ENCODE measurements at regions of chr1 and their contacts with region 1.

Region 1: GRCh38 chr1:45011837-45012638 is at the start of gene UROD:
- DNase-seq: peak; percentile 93
- ATAC-seq: peak; percentile 72
- H3K4me3 ChIP-seq: peak within 1 kb of the TSS; percentile 74 to 75
- H3K27ac ChIP-seq: peak within 1 kb of the TSS; percentile 65
- H3K4me1 ChIP-seq: peaks cover 9 to 28% of the 10 kb centered on the region in 2 experiments; a peak in 3 of 4 replicates
- H3K27me3 ChIP-seq: no peaks in the 10 kb centered on the region
- CTCF ChIP-seq: no peak
- POLR2A ChIP-seq: peak; percentile 85
- RAD21 ChIP-seq: peak; percentile 2; the same call in 1 of the 2 replicates
- total RNA-seq, gene UROD: 73.7 TPM

Region 2: DNA sequence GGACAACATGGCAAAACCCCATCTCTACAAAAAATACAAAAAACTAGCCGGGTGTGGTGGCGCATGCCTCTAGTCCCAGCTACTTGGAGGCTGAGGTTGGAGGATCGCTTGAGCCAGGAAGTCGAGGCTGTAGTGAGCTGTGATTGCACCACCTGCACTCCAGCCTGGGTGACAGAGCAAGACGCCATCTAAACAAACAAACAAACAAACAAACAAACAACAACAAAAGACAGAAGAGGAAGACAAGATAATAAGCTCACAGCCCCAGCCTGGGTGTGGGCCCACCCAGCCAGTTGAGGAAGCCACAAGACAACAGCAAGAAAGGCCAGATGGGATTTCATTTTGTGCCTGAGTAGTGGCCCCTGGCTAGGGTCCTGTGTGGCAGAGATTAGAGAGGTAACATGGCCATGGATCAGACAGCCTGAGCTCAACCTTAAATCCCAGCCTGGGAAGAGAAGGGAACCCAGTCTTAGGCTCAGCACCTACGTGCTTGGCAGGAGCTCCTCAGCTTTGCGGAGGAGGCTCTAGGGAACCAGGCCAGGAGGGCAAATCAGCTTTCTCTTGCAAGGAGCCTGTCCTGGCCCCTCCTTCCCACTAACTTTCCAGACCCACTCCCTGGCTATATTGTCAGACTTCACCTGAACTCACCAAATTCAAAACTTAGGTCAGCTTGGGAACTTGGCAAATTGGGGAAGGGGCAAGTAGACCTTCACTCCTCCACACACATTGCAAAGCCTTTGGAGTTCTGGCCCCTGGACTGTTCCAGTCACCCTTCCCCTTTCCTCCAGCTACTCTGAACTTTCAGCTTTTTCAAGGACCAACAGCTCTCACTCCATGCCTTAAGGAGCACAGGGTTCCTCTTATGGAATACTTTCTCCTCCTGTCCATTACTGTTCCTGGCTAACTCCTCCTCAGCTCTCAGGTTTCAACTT is 219.0 kb before region 1 on chr1:
- CTCF ChIA-PET with region 1: interaction called, 16 read pairs
- POLR2A ChIA-PET with region 1: interaction called, 16 read pairs
- RAD21 ChIA-PET with region 1: interaction called in 1 of 2 experiments, 4 read pairs
- intact Hi-C with region 1: loop called (anchors 2 kb)
- DNase-seq: no peak
- ATAC-seq: no peak
- H3K4me3 ChIP-seq: peak overlapping the region in 1 of 2 experiments; percentile 8; a peak in 1 of 4 replicates
- H3K27ac ChIP-seq: peak overlapping the region; percentile 58
- H3K4me1 ChIP-seq: peaks cover 14 to 30% of the 10 kb centered on the region in 2 experiments; a peak in 3 of 4 replicates
- H3K27me3 ChIP-seq: no peaks in the 10 kb centered on the region
- CTCF ChIP-seq: no peak
- POLR2A ChIP-seq: no peak
- RAD21 ChIP-seq: no peak

Region 3: GRCh38 chr1:44819608-44820327 is 192.3 kb before region 1 on chr1:
- CTCF ChIA-PET with region 1: no interaction called
- POLR2A ChIA-PET with region 1: interaction called, 14 read pairs
- RAD21 ChIA-PET with region 1: interaction called in 1 of 2 experiments, 6 read pairs
- intact Hi-C with region 1: no loop called
- DNase-seq: peak; percentile 96
- ATAC-seq: peak; percentile 93
- H3K4me3 ChIP-seq: peak overlapping the region; percentile 36 to 48
- H3K27ac ChIP-seq: peak overlapping the region; percentile 83
- H3K4me1 ChIP-seq: peaks cover 11 to 37% of the 10 kb centered on the region in 2 experiments
- H3K27me3 ChIP-seq: no peaks in the 10 kb centered on the region
- CTCF ChIP-seq: 0 out of 6 replicates have a peak, but pooled peaks of 1 of the 3 experiments have one; percentile 9
- POLR2A ChIP-seq: peak; percentile 100
- RAD21 ChIP-seq: peak; percentile 52

Region 4: GRCh38 chr1:45023663-45024062 is 11.6 kb after region 1 on chr1:
- CTCF ChIA-PET with region 1: no interaction called
- POLR2A ChIA-PET with region 1: no interaction called
- RAD21 ChIA-PET with region 1: no interaction called
- intact Hi-C with region 1: no loop called
- DNase-seq: no peak
- ATAC-seq: no peak
- H3K4me3 ChIP-seq: no peak overlapping the region
- H3K27ac ChIP-seq: no peak overlapping the region
- H3K4me1 ChIP-seq: no peaks in the 10 kb centered on the region
- H3K27me3 ChIP-seq: no peaks in the 10 kb centered on the region
- CTCF ChIP-seq: no peak
- POLR2A ChIP-seq: no peak
- RAD21 ChIP-seq: no peak

Region 5: DNA sequence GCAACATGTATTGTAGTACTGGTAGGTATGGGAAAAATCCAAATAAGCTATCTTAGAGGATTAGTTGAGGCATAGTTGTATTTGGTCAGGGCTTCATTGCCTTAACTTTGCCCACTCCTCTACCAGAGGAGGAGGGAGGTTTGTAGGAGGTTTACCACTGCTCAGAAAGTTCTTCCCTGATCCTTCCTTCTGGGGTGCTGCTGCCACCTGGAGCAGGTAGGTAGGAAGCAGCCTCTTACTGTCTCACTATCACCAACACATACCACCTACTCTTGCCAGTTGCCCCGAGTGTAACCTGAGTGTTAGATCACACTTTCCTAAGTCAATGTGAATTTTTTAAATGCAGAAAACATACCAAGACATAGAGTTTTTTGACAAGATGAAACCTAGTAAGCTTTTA is 218.5 kb after region 1 on chr1:
- CTCF ChIA-PET with region 1: no interaction called
- POLR2A ChIA-PET with region 1: no interaction called
- RAD21 ChIA-PET with region 1: no interaction called
- intact Hi-C with region 1: loop called (anchors 1 kb)
- DNase-seq: no peak
- ATAC-seq: peak; percentile 74
- H3K4me3 ChIP-seq: no peak overlapping the region
- H3K27ac ChIP-seq: no peak overlapping the region
- H3K4me1 ChIP-seq: no peaks in the 10 kb centered on the region
- H3K27me3 ChIP-seq: no peaks in the 10 kb centered on the region
- CTCF ChIP-seq: peak; percentile 24 to 43 (median 41); a peak in 4 of 6 replicates
- POLR2A ChIP-seq: no peak
- RAD21 ChIP-seq: peak; percentile 73

Region 6: GRCh38 chr1:45339789-45340570 is 327.9 kb after region 1 on chr1 and contains the starts of genes MUTYH and TOE1:
- CTCF ChIA-PET with region 1: interaction called, 7 read pairs
- POLR2A ChIA-PET with region 1: interaction called, 7 read pairs
- RAD21 ChIA-PET with region 1: interaction called in 1 of 2 experiments, 4 read pairs
- intact Hi-C with region 1: loop called (anchors 5 kb)
- DNase-seq: peak; percentile 79
- ATAC-seq: peak; percentile 90
- H3K4me3 ChIP-seq: peak within 1 kb of the TSS; percentile 93 to 94
- H3K27ac ChIP-seq: peak within 1 kb of the TSS; percentile 82
- H3K4me1 ChIP-seq: peaks cover 21 to 50% of the 10 kb centered on the region in 2 experiments
- H3K27me3 ChIP-seq: no peaks in the 10 kb centered on the region
- CTCF ChIP-seq: no peak
- POLR2A ChIP-seq: peak; percentile 46
- RAD21 ChIP-seq: no peak
- total RNA-seq, gene MUTYH: 44.8 TPM
- total RNA-seq, gene TOE1: 11.5 TPM

Region 7: GRCh38 chr1:45569962-45570581 is 558.0 kb after region 1 on chr1:
- CTCF ChIA-PET with region 1: interaction called, 3 read pairs
- POLR2A ChIA-PET with region 1: no interaction called
- RAD21 ChIA-PET with region 1: no interaction called
- intact Hi-C with region 1: loop called (anchors 1 kb)
- DNase-seq: peak; percentile 48
- ATAC-seq: peak; percentile 87
- H3K4me3 ChIP-seq: no peak overlapping the region
- H3K27ac ChIP-seq: no peak overlapping the region
- H3K4me1 ChIP-seq: no peaks in the 10 kb centered on the region
- H3K27me3 ChIP-seq: no peaks in the 10 kb centered on the region
- CTCF ChIP-seq: peak; percentile 78 to 98 (median 98)
- POLR2A ChIP-seq: no peak
- RAD21 ChIP-seq: peak; percentile 94